ENCODE measurements at regions of chr10 and their contacts with region 1.

Region 1: GRCh38 chr10:100508691-100509150 is 10.9 kb downstream of the SEC31B start:
- DNase-seq: peak in 1 of 2 experiments; percentile 68
- H3K4me3 ChIP-seq: no peak overlapping the region
- H3K4me3 Mint-ChIP-seq: no peak overlapping the region
- H3K27ac Mint-ChIP-seq: no peak overlapping the region
- H3K4me1 ChIP-seq: peaks cover 20% of the 10 kb centered on the region
- H3K4me1 Mint-ChIP-seq: peaks cover 12% of the 10 kb centered on the region
- H3K27me3 ChIP-seq: no peaks in the 10 kb centered on the region
- H3K27me3 Mint-ChIP-seq: no peaks in the 10 kb centered on the region
- CTCF ChIP-seq: peak; percentile 55 to 61

Region 2: GRCh38 chr10:100303724-100304319 is 204.9 kb before region 1 on chr10:
- CTCF ChIA-PET with region 1: interaction called, 5 read pairs
- POLR2A ChIA-PET with region 1: no interaction called
- intact Hi-C with region 1: loop called (anchors 2 kb)
- DNase-seq: no peak
- H3K4me3 ChIP-seq: no peak overlapping the region
- H3K4me3 Mint-ChIP-seq: no peak overlapping the region
- H3K27ac Mint-ChIP-seq: no peak overlapping the region
- H3K4me1 ChIP-seq: peaks cover 29% of the 10 kb centered on the region
- H3K4me1 Mint-ChIP-seq: peaks cover 27% of the 10 kb centered on the region
- H3K27me3 ChIP-seq: no peaks in the 10 kb centered on the region
- H3K27me3 Mint-ChIP-seq: no peaks in the 10 kb centered on the region
- CTCF ChIP-seq: peak; percentile 59 to 70

Region 3: DNA sequence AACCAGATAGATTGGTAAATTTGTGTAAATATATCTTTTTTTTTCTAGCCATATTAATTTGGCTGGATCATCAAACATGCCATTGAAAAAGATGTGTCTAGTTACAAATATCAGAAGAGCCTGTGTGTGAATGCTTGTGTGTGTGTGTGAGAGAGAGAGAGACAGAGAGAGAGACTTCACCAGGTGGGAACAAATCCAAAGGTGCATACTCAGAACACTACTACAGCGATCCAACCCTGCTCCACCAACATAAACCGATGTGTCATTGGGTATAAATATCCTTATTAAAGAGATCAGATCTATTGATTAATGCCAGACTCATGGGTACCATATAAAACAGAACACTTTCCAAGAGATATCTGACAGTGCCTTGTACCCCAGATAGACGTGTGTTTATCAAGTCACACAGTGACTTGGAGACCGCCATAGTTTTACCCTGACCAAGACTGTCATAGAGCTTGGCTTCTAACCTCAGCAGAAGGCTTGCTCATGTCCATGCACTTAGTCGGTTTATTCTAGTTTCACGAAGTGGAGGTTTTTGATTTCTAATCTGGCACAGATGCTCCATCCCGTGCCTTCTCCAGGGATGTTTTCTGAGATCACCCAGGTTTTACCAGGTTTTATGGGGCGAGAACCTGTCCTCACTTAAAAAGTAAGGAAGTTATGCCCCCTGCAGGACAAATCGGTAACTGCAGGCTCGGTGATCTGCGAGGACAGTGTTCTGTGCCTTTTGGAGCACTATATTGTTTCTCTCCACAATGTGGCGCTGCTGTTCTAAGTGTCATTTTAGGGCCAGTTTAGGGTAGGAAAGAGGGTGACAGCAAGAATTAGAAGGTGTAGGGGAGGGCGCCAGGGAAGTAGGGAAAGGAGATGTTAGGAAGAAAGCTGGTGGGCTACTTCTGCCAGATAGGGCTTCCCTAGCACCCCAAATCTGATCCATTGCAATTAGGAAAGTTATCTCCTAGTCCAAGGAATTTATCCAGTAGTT is 75.2 kb before region 1 on chr10:
- CTCF ChIA-PET with region 1: interaction called, 13 read pairs
- POLR2A ChIA-PET with region 1: no interaction called
- intact Hi-C with region 1: loop called (anchors 1 kb)
- DNase-seq: peak; percentile 95
- H3K4me3 ChIP-seq: no peak overlapping the region
- H3K4me3 Mint-ChIP-seq: no peak overlapping the region
- H3K27ac Mint-ChIP-seq: no peak overlapping the region
- H3K4me1 ChIP-seq: no peaks in the 10 kb centered on the region
- H3K4me1 Mint-ChIP-seq: no peaks in the 10 kb centered on the region
- H3K27me3 ChIP-seq: no peaks in the 10 kb centered on the region
- H3K27me3 Mint-ChIP-seq: no peaks in the 10 kb centered on the region
- CTCF ChIP-seq: peak; percentile 96 to 97

Region 4: DNA sequence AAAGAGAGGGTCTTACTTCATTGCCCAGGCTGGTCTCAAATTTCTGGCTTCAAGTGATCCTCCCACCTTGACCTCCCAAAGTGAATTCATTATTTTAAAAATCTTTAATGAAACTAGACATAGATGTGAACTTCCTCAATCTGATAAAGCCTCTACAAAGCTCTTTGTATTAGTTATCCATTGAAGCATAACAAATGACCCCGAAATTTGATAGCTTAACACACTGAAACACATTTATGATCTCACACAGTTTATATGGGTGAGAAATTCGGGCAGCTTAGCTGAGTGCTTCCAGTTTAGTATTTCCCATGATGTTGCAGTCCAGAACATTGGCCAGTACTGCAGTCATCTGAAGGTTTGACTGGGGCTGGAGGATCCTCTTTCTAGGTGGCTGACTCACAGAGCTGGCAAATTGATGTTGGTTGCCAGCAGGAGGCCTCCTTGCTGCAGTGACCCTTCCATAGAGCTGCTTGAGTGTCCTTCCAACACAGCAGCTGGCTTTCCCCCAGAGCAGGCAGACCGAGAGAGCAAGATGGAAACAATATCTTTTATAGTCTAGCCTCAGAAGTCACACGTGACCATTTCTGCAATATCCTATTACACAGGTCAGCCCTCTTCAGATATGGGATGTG is 62.5 kb before region 1 on chr10:
- CTCF ChIA-PET with region 1: interaction called, 37 read pairs
- POLR2A ChIA-PET with region 1: no interaction called
- intact Hi-C with region 1: loop called (anchors 1 kb)
- DNase-seq: peak; percentile 37 to 46
- H3K4me3 ChIP-seq: no peak overlapping the region
- H3K4me3 Mint-ChIP-seq: no peak overlapping the region
- H3K27ac Mint-ChIP-seq: no peak overlapping the region
- H3K4me1 ChIP-seq: no peaks in the 10 kb centered on the region
- H3K4me1 Mint-ChIP-seq: peaks cover 13% of the 10 kb centered on the region
- H3K27me3 ChIP-seq: no peaks in the 10 kb centered on the region; the same call in 1 of the 2 replicates
- H3K27me3 Mint-ChIP-seq: no peaks in the 10 kb centered on the region
- CTCF ChIP-seq: peak in 1 of 2 experiments; percentile 51

Region 5: DNA sequence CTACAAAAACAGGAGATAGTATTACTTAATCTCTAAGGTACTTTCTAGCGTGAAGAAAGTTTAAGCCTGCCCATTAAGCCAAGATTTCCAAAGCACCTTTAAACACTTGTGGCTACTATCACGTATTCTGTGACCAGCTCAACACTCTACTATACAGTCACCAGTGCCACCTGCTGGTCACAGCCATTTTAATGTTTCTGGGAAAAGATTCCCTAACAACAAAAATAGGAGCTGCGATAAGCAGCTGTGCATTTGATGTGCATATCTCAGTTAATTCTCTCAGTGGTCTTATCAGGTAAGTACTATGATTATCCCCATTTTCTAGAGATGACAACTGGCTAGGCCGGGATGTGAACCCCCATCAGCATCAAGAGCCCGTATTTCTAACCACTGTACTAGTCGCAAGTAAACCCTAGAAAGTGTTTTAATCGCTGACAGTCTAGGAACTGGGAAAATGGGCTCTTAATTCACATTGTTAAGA is 10.1 kb after region 1 on chr10:
- CTCF ChIA-PET with region 1: interaction called, 36 read pairs
- POLR2A ChIA-PET with region 1: no interaction called
- intact Hi-C with region 1: no loop called
- DNase-seq: peak; percentile 52 to 66
- H3K4me3 ChIP-seq: no peak overlapping the region
- H3K4me3 Mint-ChIP-seq: no peak overlapping the region
- H3K27ac Mint-ChIP-seq: no peak overlapping the region
- H3K4me1 ChIP-seq: no peaks in the 10 kb centered on the region
- H3K4me1 Mint-ChIP-seq: no peaks in the 10 kb centered on the region
- H3K27me3 ChIP-seq: no peaks in the 10 kb centered on the region
- H3K27me3 Mint-ChIP-seq: no peaks in the 10 kb centered on the region
- CTCF ChIP-seq: peak; percentile 58 to 70